ENCODE measurements at regions of chr19 and their contacts with region 1.

Region 1: GRCh38 chr19:3665681-3666544 is 34.4 kb downstream of the PIP5K1C start:
- DNase-seq: peak; percentile 56 to 91 (median 77)
- ATAC-seq: peak; percentile 98
- H3K4me3 ChIP-seq: no peak overlapping the region
- H3K4me3 Mint-ChIP-seq: no peak overlapping the region
- H3K27ac ChIP-seq: no peak overlapping the region
- H3K27ac Mint-ChIP-seq: no peak overlapping the region
- H3K4me1 ChIP-seq: peaks cover 11% of the 10 kb centered on the region
- H3K4me1 Mint-ChIP-seq: peaks cover 11% of the 10 kb centered on the region
- H3K27me3 ChIP-seq: no peaks in the 10 kb centered on the region
- H3K27me3 Mint-ChIP-seq: no peaks in the 10 kb centered on the region
- CTCF ChIP-seq: peak; percentile 85

Region 2: DNA sequence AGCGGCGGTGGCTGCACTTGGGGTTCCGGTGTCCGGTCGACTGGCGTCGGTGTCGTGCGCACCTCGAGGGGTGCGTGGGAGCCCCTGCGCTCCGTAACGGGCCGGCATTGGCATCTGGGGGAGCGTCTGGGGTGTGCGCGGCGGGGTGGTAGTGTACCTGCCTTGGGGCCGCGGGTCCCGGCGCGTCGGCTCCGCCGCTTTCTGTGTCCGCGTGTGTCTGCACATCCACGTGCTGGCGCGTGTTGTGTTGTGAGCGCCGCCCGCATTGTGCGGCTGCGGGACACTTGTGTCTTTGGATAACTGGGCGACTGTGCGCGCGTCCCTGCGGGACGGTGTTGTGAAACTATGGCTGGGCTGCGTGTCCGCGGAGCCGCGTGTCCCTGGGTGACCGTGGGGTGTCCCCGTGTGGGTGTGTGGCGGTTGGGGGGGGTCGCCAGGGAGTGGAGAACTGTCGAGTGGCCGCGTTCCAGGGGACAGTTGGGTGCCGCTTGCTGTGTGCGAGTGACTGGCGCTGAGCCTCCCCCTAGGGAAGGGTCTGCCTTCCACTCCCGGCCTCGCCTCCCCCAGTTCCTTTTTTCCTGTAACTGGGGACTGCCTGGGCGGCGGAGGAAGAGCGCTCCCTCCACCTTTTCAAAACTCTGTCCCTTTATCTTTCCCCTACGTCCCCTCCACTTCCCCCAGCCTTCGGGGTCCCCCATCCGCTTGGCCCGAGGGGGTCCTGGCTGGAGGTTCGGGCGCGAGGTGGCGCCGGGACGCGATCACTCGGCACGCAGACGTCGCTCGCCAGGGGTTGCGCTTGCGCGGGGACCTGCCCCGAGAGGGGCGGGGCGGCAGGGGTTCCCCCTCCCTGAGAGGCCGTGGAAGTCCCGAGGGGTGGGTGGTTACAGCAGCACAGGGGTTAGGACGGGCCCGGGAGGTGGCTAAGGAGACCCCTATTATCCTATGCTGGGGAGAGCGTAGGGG is 305.2 kb before region 1 on chr19:
- CTCF ChIA-PET with region 1: no interaction called
- POLR2A ChIA-PET with region 1: no interaction called
- intact Hi-C with region 1: no loop called
- DNase-seq: peak; percentile 35 to 90 (median 74)
- ATAC-seq: peak; percentile 55
- H3K4me3 ChIP-seq: peak overlapping the region; percentile 66 to 69
- H3K4me3 Mint-ChIP-seq: peak overlapping the region; percentile 90
- H3K27ac ChIP-seq: peak overlapping the region; percentile 38 to 63
- H3K27ac Mint-ChIP-seq: peak overlapping the region; percentile 91
- H3K4me1 ChIP-seq: peaks cover 31% of the 10 kb centered on the region
- H3K4me1 Mint-ChIP-seq: peaks cover 57% of the 10 kb centered on the region
- H3K27me3 ChIP-seq: no peaks in the 10 kb centered on the region
- H3K27me3 Mint-ChIP-seq: no peaks in the 10 kb centered on the region
- CTCF ChIP-seq: no peak

Region 3: GRCh38 chr19:3700221-3701032 is 34.5 kb after region 1 on chr19 and contains the start of gene PIP5K1C:
- CTCF ChIA-PET with region 1: interaction called, 160 read pairs
- POLR2A ChIA-PET with region 1: interaction called, 3 read pairs
- intact Hi-C with region 1: loop called (anchors 1 kb)
- DNase-seq: peak; percentile 84 to 97 (median 92)
- ATAC-seq: peak; percentile 100
- H3K4me3 ChIP-seq: peak within 1 kb of the TSS; percentile 61 to 63
- H3K4me3 Mint-ChIP-seq: peak within 1 kb of the TSS; percentile 88
- H3K27ac ChIP-seq: no peak within 1 kb of the TSS
- H3K27ac Mint-ChIP-seq: peak within 1 kb of the TSS; percentile 81
- H3K4me1 ChIP-seq: peaks cover 19% of the 10 kb centered on the region
- H3K4me1 Mint-ChIP-seq: peaks cover 29% of the 10 kb centered on the region
- H3K27me3 ChIP-seq: no peaks in the 10 kb centered on the region
- H3K27me3 Mint-ChIP-seq: peaks cover 1% of the 10 kb centered on the region
- CTCF ChIP-seq: peak; percentile 82
- total RNA-seq, gene PIP5K1C: 11.4 to 12.2 TPM

Region 4: GRCh38 chr19:3710265-3710812 is 44.4 kb after region 1 on chr19:
- CTCF ChIA-PET with region 1: interaction called, 84 read pairs
- POLR2A ChIA-PET with region 1: no interaction called
- intact Hi-C with region 1: loop called (anchors 1 kb)
- DNase-seq: peak in 1 of 9 experiments; percentile 37
- ATAC-seq: no peak
- H3K4me3 ChIP-seq: no peak overlapping the region
- H3K4me3 Mint-ChIP-seq: no peak overlapping the region
- H3K27ac ChIP-seq: no peak overlapping the region
- H3K27ac Mint-ChIP-seq: no peak overlapping the region
- H3K4me1 ChIP-seq: no peaks in the 10 kb centered on the region
- H3K4me1 Mint-ChIP-seq: peaks cover 6% of the 10 kb centered on the region
- H3K27me3 ChIP-seq: peaks cover 0 to 4% of the 10 kb centered on the region in 2 experiments
- H3K27me3 Mint-ChIP-seq: peaks cover 5% of the 10 kb centered on the region
- CTCF ChIP-seq: no peak

Region 5: DNA sequence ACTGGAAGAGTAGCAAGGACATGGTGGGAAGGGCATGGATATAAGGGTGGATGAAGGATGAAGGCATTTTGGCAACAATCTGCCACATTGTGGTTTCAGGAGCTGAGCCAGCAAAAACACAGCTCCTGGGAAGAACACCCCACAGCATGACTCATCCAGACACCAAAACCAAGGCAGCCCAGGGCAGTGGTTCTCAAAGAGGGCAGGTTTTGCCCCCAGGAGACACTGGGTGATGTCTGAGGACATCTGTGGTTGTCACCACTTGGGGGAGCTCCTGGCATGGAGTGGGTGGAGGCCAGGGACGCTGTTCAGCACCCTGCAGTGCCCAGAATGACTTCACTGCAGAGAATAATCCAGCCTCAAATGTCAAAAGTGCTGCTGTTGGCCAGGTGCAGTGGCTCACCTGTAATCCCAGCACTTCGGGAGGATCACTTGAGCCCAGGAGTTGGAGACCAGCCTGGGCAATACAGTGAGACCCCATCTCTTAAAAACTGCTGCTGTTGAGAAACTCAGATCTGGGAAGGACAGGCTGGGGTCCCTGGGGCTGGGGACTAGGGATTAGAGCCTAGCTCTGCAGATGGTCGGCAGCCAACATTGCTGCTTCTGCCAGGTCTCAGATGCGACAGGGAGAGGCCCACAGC is 186.8 kb after region 1 on chr19:
- CTCF ChIA-PET with region 1: no interaction called
- POLR2A ChIA-PET with region 1: no interaction called
- intact Hi-C with region 1: loop called in 1 of 2 experiments (anchors 1 kb)
- DNase-seq: peak in 8 of 9 experiments; percentile 27 to 68 (median 54)
- ATAC-seq: peak; percentile 57
- H3K4me3 ChIP-seq: no peak overlapping the region
- H3K4me3 Mint-ChIP-seq: no peak overlapping the region
- H3K27ac ChIP-seq: no peak overlapping the region
- H3K27ac Mint-ChIP-seq: no peak overlapping the region
- H3K4me1 ChIP-seq: no peaks in the 10 kb centered on the region
- H3K4me1 Mint-ChIP-seq: no peaks in the 10 kb centered on the region
- H3K27me3 ChIP-seq: no peaks in the 10 kb centered on the region
- H3K27me3 Mint-ChIP-seq: no peaks in the 10 kb centered on the region
- CTCF ChIP-seq: peak; percentile 37

Region 6: DNA sequence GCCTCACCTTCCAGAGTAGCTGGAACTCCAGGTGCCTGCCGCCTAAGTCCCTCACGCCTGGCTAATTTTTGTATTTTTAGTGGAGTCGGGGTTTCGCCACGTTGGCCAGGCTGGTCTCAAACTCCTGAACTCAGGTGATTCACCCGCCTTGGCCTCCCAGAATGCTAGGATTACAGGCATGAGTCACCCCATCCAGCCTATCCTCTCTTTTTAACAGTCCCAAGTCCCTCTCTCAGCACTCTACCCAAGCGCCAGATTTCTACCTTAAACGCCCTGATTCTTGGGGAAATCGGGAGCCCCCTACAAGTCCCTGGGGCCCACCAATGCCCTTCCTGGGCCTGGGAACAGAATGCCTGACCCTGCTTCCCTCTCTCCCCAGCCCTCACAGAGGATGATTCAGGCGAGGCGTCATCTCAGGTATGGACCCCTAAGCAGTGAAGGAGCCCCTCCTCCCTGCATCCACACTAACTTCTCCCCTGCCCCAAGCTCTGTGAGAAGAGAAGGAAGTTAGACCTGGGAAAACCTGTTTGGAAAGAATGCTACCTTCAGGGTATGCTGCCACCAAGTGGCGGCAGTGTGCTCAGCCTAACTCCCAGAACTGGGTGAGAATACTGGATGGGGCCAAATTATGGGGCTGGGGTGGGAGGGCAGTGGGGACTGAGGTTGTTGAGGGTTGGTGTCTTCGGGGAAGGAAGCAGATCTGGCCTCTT is 542.6 kb after region 1 on chr19:
- CTCF ChIA-PET with region 1: no interaction called
- POLR2A ChIA-PET with region 1: no interaction called
- intact Hi-C with region 1: loop called in 1 of 2 experiments (anchors 1 kb)
- DNase-seq: no peak
- ATAC-seq: no peak
- H3K4me3 ChIP-seq: no peak overlapping the region
- H3K4me3 Mint-ChIP-seq: no peak overlapping the region
- H3K27ac ChIP-seq: no peak overlapping the region
- H3K27ac Mint-ChIP-seq: no peak overlapping the region
- H3K4me1 ChIP-seq: no peaks in the 10 kb centered on the region
- H3K4me1 Mint-ChIP-seq: peaks cover 2% of the 10 kb centered on the region
- H3K27me3 ChIP-seq: no peaks in the 10 kb centered on the region
- H3K27me3 Mint-ChIP-seq: peaks cover 9% of the 10 kb centered on the region
- CTCF ChIP-seq: no peak